Posterior vena cava (tissue), 2 donors: ENCODE measurements at regions of chr1 and their contacts with region 1.

Region 1: DNA sequence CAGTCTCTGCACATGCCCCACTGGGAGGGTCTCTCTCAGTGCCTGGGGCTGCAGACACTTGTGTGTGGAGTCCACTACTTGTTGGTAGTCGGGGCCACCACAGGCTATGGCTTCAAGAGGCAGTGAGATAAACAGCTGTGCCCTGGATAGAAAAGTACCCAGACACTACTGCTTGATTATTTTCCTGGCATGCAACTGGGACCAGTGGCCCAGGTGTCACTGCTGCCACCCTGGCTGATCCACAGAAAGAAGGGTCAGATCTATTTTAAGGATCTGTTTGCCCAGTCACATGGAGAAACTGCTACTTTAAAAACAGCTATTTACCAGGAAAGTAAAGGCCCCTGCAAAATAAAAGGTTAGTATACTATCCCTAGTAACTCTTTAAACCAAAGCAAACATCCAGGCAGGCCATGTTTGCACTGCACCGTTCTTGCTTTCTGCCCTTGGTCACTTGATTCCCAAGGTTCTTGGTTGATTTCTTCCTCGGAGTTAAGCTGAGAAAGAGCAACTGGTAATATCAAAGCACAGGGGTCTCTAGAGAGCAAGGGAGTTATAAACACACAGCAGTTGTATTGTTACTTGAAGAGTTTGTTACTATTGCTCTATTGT is 99.9 kb downstream of the GLUL start:
- DNase-seq: no peak

Region 2: GRCh38 chr1:182317611-182318161 is 26.0 kb after region 1 on chr1:
- intact Hi-C with region 1: loop called in 1 of 2 experiments (anchors 1 kb)
- DNase-seq: no peak

Region 3: GRCh38 chr1:182337736-182338571 is 46.3 kb after region 1 on chr1:
- intact Hi-C with region 1: no loop called
- DNase-seq: no peak